ENCODE measurements at regions of chr6 and their contacts with region 1.

Region 1: GRCh38 chr6:138638604-138639003 is 135.0 kb upstream of the CCDC28A start:
- DNase-seq: no peak
- H3K4me3 ChIP-seq: no peak overlapping the region
- H3K27ac ChIP-seq: no peak overlapping the region
- H3K4me1 ChIP-seq: no peaks in the 10 kb centered on the region
- H3K27me3 ChIP-seq: no peaks in the 10 kb centered on the region
- CTCF ChIP-seq: no peak

Region 2: GRCh38 chr6:138722425-138723371 is 84.1 kb after region 1 on chr6:
- CTCF ChIA-PET with region 1: no interaction called
- POLR2A ChIA-PET with region 1: interaction called, 12 read pairs
- intact Hi-C with region 1: no loop called
- DNase-seq: peak; percentile 62
- H3K4me3 ChIP-seq: no peak overlapping the region
- H3K27ac ChIP-seq: no peak overlapping the region
- H3K4me1 ChIP-seq: peaks cover 8% of the 10 kb centered on the region
- H3K27me3 ChIP-seq: no peaks in the 10 kb centered on the region
- CTCF ChIP-seq: no peak